HCT116 (cell line): ENCODE measurements at regions of chr5 and their contacts with region 1.

Region 1: DNA sequence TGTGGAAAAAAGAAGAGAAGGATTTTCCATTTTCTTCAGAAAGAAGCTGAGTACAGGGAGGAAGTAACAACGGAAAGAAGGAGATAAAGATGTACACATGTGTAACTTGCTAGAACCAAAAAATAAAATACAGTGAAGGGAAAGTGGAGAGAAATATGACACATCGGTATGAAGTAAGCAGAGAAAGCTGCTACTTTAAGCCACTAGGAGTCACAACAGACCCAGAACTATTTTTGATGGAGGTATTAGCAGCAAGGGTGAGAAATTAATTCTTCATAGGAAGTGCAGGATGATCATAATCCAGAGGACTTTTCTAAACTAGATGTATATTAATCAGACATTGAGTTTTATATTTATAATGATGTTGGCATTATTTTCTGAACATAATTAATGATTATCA is 88.5 kb downstream of the FAM174A start:
- DNase-seq: no peak
- ATAC-seq: peak; percentile 79
- H3K4me3 ChIP-seq: no peak overlapping the region
- H3K27ac ChIP-seq: no peak overlapping the region
- H3K4me1 ChIP-seq: no peaks in the 10 kb centered on the region
- H3K27me3 ChIP-seq: no peaks in the 10 kb centered on the region
- CTCF ChIP-seq: peak; percentile 30 to 61 (median 53); a peak in 5 of 6 replicates
- POLR2A ChIP-seq: no peak
- RAD21 ChIP-seq: peak; percentile 66

Region 2: GRCh38 chr5:100667161-100667630 is 43.5 kb after region 1 on chr5:
- CTCF ChIA-PET with region 1: no interaction called
- POLR2A ChIA-PET with region 1: no interaction called
- RAD21 ChIA-PET with region 1: no interaction called
- intact Hi-C with region 1: no loop called
- DNase-seq: no peak
- ATAC-seq: no peak
- H3K4me3 ChIP-seq: no peak overlapping the region
- H3K27ac ChIP-seq: no peak overlapping the region
- H3K4me1 ChIP-seq: peaks cover 0 to 15% of the 10 kb centered on the region in 2 experiments; a peak in 2 of 4 replicates
- H3K27me3 ChIP-seq: no peaks in the 10 kb centered on the region
- CTCF ChIP-seq: no peak
- POLR2A ChIP-seq: no peak
- RAD21 ChIP-seq: no peak

Region 3: DNA sequence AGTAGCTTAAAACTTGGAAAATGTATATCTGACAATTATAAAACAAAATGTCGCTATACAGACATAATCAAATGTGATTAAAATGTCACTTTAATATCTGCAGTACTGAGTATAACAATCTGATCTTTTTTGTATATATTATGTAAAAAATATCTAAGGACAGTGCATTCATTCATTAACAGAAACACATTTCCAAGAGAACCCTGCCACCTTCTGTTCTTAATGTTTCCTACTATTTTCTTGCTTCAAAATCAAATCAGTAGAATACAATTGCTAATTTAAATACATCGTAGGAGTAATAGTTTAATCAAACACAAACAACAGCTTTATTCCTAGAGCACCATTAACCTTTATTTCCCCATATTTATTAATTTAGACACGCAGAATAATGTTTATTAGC is 422.0 kb after region 1 on chr5:
- CTCF ChIA-PET with region 1: no interaction called
- POLR2A ChIA-PET with region 1: no interaction called
- RAD21 ChIA-PET with region 1: no interaction called
- intact Hi-C with region 1: loop called (anchors 5 kb)
- DNase-seq: peak; percentile 15
- ATAC-seq: no peak
- H3K4me3 ChIP-seq: no peak overlapping the region
- H3K27ac ChIP-seq: no peak overlapping the region
- H3K4me1 ChIP-seq: no peaks in the 10 kb centered on the region
- H3K27me3 ChIP-seq: no peaks in the 10 kb centered on the region
- CTCF ChIP-seq: peak in 2 of 3 experiments; percentile 43 to 50; a peak in 3 of 6 replicates
- POLR2A ChIP-seq: no peak
- RAD21 ChIP-seq: peak; percentile 69

Region 4: DNA sequence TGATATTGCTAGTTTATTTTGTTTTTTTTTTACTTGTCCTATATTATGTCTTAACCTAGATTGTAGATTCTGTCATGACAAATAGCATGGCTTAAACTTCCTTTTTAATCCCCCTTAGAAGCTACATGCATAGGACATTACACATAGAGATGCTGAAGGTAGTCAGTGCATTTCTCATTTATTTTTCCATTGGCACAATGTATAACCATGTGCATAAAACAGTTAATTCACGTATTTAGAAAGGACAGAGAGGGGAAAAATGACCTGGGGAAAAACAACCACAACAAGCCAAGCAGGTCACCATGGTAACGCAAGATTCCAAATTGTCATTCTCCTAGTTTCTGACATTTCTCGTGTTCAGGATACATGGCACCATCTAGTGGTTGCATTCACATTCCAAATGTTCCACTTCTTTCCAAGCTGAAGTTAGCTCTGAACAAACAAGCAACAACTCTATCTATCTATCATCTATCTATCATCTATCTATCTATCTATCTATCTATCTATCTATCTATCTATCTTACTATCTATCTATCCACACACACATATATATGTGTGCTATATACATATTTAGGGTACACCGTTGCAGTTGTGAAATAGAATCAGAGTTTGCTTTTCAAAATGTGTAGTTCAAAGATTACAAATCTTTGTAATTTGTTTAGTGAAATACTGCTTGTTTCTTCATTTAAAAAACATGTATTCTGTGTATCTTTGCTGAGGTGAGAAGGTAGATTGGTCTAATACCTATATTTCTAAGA is 766.6 kb after region 1 on chr5:
- CTCF ChIA-PET with region 1: interaction called, 4 read pairs
- POLR2A ChIA-PET with region 1: no interaction called
- RAD21 ChIA-PET with region 1: no interaction called
- intact Hi-C with region 1: loop called (anchors 10 kb)
- DNase-seq: peak; percentile 57
- ATAC-seq: peak; percentile 69
- H3K4me3 ChIP-seq: no peak overlapping the region
- H3K27ac ChIP-seq: no peak overlapping the region
- H3K4me1 ChIP-seq: no peaks in the 10 kb centered on the region
- H3K27me3 ChIP-seq: no peaks in the 10 kb centered on the region
- CTCF ChIP-seq: peak; percentile 31 to 73 (median 58); a peak in 5 of 6 replicates
- POLR2A ChIP-seq: no peak
- RAD21 ChIP-seq: peak; percentile 74

Region 5: GRCh38 chr5:101590384-101590783 is 966.7 kb after region 1 on chr5:
- CTCF ChIA-PET with region 1: no interaction called
- POLR2A ChIA-PET with region 1: no interaction called
- RAD21 ChIA-PET with region 1: no interaction called
- intact Hi-C with region 1: loop called (anchors 5 kb)
- DNase-seq: peak; percentile 12
- ATAC-seq: peak; percentile 75
- H3K4me3 ChIP-seq: no peak overlapping the region
- H3K27ac ChIP-seq: no peak overlapping the region
- H3K4me1 ChIP-seq: no peaks in the 10 kb centered on the region
- H3K27me3 ChIP-seq: no peaks in the 10 kb centered on the region
- CTCF ChIP-seq: peak; percentile 32 to 73 (median 60); a peak in 5 of 6 replicates
- POLR2A ChIP-seq: no peak
- RAD21 ChIP-seq: peak; percentile 77